ENCODE measurements at regions of chr9 and their contacts with region 1.

Region 1: GRCh38 chr9:133184962-133185361 is 21.2 kb upstream of the GBGT1 start:
- H3K4me3 ChIP-seq: no peak overlapping the region
- H3K27ac ChIP-seq: no peak overlapping the region
- H3K4me1 ChIP-seq: no peaks in the 10 kb centered on the region
- CTCF ChIP-seq: peak; percentile 54; the same call in 1 of the 2 replicates

Region 2: GRCh38 chr9:132910376-132910775 is 274.6 kb before region 1 on chr9:
- CTCF ChIA-PET with region 1: no interaction called
- POLR2A ChIA-PET with region 1: no interaction called
- H3K4me3 ChIP-seq: no peak overlapping the region
- H3K27ac ChIP-seq: no peak overlapping the region
- H3K4me1 ChIP-seq: no peaks in the 10 kb centered on the region
- CTCF ChIP-seq: no peak

Region 3: DNA sequence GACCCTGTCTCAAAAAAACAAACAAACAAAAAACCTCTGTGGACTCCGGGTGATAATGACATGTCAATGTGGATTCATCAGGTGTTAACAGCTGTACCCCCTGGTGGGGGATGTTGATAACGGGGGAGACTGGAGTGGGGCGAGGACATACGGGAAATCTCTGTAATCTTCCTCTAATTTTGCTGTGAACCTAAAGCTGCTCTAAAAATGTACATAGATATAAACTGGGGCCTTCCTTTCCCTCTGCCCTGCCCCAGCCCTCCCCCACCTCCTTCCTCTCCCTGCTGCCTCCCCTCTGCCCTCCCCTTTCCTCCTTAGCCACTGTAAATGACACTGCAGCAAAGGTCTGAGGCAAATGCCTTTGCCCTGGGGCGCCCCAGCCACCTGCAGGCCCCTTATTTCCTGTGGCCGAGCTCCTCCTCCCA is 124.5 kb before region 1 on chr9:
- CTCF ChIA-PET with region 1: no interaction called
- POLR2A ChIA-PET with region 1: no interaction called
- H3K4me3 ChIP-seq: no peak overlapping the region
- H3K27ac ChIP-seq: no peak overlapping the region
- H3K4me1 ChIP-seq: peaks cover 6% of the 10 kb centered on the region; the same call in 1 of the 2 replicates
- CTCF ChIP-seq: no peak

Region 4: DNA sequence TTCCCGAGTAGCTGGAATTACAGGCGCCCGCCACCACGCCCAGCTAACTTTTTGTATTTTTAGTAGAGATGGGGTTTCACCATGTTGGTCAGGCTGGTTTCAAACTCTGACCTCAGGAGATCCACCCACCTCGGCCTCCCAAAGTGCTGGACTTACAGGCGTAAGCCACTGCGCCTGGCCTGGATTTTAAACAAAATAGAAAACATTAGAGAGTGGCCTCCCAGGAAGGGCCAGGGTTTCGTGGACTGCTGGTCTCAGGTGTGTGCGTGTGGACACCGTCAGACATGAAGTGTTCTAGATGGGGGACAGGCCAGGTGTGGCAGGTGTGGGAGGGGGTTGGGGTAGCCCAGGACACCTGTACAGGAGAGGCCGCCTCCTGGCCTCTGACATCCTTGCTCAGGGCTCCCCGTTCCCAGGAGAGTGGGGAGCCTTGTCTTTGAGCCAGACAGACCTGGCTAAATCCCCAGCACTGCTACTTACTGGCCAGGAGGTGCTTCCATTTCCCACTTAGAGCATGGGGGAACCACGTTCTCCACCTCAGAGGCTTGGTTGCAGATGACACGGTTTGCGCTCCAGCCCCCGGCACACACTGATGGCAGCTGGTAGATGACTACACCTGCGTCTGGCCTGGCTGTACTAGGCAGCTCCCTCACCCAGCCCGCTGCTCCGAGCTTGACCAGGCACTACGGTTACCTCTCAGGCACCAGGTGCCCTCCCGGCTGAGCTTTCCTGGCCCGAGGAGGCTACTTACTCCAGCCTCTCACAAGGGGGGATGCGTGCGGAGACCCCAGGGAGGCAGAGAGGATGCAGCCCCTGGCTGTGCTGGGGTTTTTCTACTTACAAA is 14.0 kb before region 1 on chr9:
- CTCF ChIA-PET with region 1: interaction called, 29 read pairs
- POLR2A ChIA-PET with region 1: no interaction called
- H3K4me3 ChIP-seq: no peak overlapping the region
- H3K27ac ChIP-seq: no peak overlapping the region
- H3K4me1 ChIP-seq: no peaks in the 10 kb centered on the region
- CTCF ChIP-seq: no peak

Region 5: DNA sequence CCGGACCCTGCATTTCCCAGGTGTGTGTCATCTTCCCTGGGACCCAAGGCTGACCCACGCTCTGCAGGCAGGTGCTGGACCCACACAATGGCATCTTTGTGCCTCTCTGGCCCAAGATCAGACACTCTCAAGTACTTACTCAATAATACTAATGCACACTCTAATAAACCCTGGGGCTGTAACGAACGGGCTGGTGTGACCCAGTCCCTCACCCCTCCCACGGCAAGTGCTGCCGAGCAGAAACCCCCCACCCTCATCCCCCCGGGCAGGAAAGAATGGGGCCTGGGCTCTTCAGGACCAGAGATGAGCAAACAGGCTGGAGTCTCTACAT is 25.2 kb after region 1 on chr9:
- CTCF ChIA-PET with region 1: interaction called, 10 read pairs
- POLR2A ChIA-PET with region 1: no interaction called
- H3K4me3 ChIP-seq: no peak overlapping the region
- H3K27ac ChIP-seq: no peak overlapping the region
- H3K4me1 ChIP-seq: no peaks in the 10 kb centered on the region
- CTCF ChIP-seq: no peak

Region 6: DNA sequence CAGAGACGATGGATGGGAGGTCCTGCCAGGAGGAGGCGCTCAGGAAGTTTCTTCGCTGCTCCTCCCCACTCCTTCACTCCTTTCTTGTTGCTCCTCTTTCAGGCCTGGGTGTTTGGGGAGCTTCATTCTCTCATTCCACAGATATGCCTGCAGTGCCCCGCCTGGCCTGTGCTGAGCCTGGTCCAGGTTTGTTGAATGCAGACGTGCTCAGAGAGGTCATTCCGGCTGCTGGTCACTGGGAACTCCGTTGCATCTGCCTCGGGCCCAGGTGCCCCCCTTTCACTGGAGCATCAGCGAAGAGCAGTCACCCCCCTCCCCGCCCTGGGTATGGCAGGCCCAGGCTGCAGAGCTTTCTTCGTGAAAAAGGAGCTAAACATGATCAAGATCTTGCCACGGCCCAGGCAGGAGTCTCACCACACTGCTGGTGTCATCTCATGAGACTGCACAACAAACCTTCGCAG is 135.5 kb after region 1 on chr9:
- CTCF ChIA-PET with region 1: interaction called, 14 read pairs
- POLR2A ChIA-PET with region 1: no interaction called
- H3K4me3 ChIP-seq: no peak overlapping the region
- H3K27ac ChIP-seq: no peak overlapping the region
- H3K4me1 ChIP-seq: no peaks in the 10 kb centered on the region
- CTCF ChIP-seq: no peak

Region 7: GRCh38 chr9:133335878-133336811 is 151.2 kb after region 1 on chr9 and contains the start of gene SURF6:
- CTCF ChIA-PET with region 1: interaction called, 159 read pairs
- POLR2A ChIA-PET with region 1: interaction called, 19 read pairs
- H3K4me3 ChIP-seq: peak within 1 kb of the TSS; percentile 74
- H3K27ac ChIP-seq: peak within 1 kb of the TSS; percentile 71
- H3K4me1 ChIP-seq: peaks cover 4% of the 10 kb centered on the region; the same call in 1 of the 2 replicates
- CTCF ChIP-seq: no peak

Region 8: DNA sequence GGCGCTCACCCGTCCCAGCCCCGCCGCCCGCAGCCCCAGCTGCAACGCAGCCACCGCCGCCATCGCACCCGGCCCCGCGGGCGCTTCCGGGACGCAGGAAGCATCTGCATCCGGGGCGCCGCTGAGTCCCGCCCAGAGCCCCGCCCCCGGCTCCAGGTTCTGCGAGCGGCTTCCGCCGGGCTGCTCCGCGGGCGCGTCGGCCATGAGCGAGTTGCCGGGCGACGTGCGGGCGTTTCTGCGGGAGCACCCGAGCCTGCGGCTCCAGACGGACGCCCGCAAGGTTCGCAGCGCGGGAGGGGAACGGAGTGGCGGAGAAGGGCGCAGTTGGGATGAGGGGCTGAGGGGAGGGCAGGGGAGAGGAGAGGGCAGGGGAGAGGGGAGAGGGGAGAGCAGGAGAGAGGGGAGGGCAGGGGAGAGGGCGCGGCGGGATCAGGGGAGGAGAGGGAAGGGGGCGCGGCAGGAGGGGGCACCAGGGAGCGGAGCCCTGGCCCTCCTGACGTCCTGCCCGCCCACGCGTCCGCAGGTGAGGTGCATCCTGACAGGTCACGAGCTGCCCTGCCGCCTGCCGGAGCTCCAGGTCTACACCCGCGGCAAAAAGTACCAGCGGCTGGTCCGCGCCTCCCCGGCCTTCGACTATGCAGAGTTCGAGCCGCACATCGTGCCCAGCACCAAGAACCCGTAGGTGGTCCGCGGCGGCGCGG is 171.6 kb after region 1 on chr9 and contains the starts of genes SURF1 and SURF2:
- CTCF ChIA-PET with region 1: interaction called, 13 read pairs
- POLR2A ChIA-PET with region 1: no interaction called
- H3K4me3 ChIP-seq: peak within 1 kb of the TSS; percentile 83
- H3K27ac ChIP-seq: peak within 1 kb of the TSS; percentile 43; the same call in 1 of the 2 replicates
- H3K4me1 ChIP-seq: no peaks in the 10 kb centered on the region
- CTCF ChIP-seq: no peak; the same call in none of the 2 replicates

Region 9: GRCh38 chr9:133572821-133573361 is 387.9 kb after region 1 on chr9:
- CTCF ChIA-PET with region 1: no interaction called
- POLR2A ChIA-PET with region 1: no interaction called
- H3K4me3 ChIP-seq: no peak overlapping the region
- H3K27ac ChIP-seq: no peak overlapping the region
- H3K4me1 ChIP-seq: no peaks in the 10 kb centered on the region
- CTCF ChIP-seq: no peak